ENCODE measurements at regions of chr6 and their contacts with region 1.

Region 1: DNA sequence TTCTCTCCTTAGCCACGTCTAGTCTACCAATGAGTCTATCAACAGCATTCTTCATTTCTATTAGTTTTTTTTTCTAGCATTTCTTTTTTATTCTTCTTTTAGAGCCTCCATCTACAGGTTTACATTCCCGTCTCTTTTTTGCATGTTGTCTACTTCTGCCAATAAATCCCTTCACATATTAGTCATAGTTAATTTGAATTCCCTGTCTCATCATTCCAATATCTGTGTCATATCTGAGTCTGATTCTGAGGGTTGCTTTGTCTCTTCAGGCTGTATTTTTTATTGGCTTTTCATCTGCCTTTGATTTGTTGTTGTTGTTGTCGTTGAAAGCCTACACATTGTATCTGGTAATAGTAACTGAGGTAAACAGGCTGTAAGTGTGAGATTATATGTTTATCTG is 104.6 kb downstream of the HMGCLL1 start:
- DNase-seq: no peak
- H3K4me3 ChIP-seq: no peak overlapping the region
- H3K27ac ChIP-seq: no peak overlapping the region
- H3K4me1 ChIP-seq: no peaks in the 10 kb centered on the region
- H3K27me3 ChIP-seq: no peaks in the 10 kb centered on the region
- CTCF ChIP-seq: no peak

Region 2: DNA sequence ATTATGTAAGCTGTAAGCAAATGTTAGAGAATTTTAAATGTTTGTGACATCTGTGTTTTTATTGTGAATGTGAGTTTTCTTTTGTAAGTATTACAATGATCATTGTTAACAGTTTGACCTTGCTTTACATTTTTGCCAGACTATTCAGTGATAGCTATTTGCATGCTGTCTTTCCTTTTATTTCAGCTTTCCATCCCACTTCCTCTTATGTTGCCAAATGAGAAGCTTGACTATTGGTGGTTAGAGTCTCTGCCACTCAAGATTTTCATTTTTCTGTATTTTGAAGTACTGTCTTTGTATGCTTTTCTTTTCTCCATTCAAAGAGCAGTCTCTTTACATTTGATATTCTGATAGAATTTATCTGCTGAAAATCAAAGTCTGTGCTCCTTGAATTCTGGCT is 1947.1 kb after region 1 on chr6:
- CTCF ChIA-PET with region 1: no interaction called
- POLR2A ChIA-PET with region 1: interaction called, 12 read pairs
- intact Hi-C with region 1: no loop called
- DNase-seq: no peak
- H3K4me3 ChIP-seq: no peak overlapping the region
- H3K27ac ChIP-seq: no peak overlapping the region
- H3K4me1 ChIP-seq: peaks cover 5% of the 10 kb centered on the region
- H3K27me3 ChIP-seq: no peaks in the 10 kb centered on the region
- CTCF ChIP-seq: no peak

Measured in A673 (cell line).